HEK293 (cell line): ENCODE measurements at regions of chr9 and their contacts with region 1.

Region 1: GRCh38 chr9:70602321-70603019 is 188.0 kb upstream of the KLF9 start:
- H3K4me3 ChIP-seq: no peak overlapping the region
- H3K27ac ChIP-seq: peak overlapping the region; percentile 93; the same call in 1 of the 2 replicates
- H3K4me1 ChIP-seq: peaks cover 9% of the 10 kb centered on the region
- CTCF ChIP-seq: peak; percentile 42; the same call in 1 of the 2 replicates

Region 2: DNA sequence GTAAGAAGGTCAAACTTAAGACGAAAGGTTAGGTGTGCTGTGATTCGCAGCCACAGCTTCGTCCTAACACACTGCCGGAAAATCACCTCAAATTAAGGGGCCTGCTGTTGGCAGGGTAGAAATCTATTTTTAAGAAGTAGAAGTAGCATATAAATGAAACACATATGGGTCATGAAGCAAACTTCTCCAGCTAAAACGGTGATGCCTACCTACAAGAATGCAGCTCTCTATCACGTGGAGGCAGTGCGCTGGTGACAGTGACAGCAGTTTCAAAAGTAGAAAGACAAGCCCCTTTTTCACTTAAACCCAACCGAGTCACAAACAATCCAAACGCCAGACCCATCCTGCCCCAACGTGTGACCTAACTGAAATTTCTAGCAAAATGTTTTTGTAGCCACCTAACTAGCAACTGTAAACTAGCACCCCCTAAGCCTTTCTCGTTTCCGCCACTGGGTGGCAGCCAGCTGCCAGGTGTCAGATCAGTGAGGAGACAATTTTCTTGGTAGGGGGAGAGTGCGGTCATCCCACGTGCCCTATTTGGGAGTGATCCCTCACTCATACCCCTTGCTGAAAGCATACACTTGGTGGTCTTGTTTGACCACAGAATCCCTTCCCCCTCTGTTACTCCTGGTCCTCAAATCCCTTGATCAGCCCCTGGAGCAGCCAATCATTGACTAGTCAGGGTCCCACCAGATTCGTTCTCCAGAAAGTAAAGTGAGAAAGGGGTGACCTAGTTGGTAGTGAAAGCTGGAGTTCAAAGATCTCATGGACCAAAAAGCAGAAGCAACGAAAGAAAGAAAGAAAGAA is 630.6 kb before region 1 on chr9:
- CTCF ChIA-PET with region 1: interaction called, 16 read pairs
- POLR2A ChIA-PET with region 1: no interaction called
- H3K4me3 ChIP-seq: no peak overlapping the region
- H3K27ac ChIP-seq: no peak overlapping the region
- H3K4me1 ChIP-seq: no peaks in the 10 kb centered on the region
- CTCF ChIP-seq: peak; percentile 55; the same call in 1 of the 2 replicates

Region 3: DNA sequence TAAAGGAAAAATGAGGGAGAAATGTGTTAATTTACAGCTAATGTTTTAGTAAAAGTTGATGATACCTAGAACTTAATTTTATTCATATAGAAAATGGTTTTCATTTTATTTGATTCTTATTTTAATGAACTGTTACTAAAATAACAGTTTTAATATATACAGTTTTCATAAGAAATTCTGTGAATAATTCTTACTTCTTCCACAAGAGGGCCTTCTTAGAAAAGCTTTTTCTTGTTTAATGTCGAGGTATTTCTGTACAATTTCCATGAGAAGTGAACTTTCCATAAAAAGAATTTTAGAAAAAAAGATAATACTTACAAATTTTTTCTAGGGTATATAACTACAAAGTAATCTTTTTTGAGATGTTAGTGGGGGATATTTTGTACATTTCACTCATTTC is 261.9 kb before region 1 on chr9:
- CTCF ChIA-PET with region 1: interaction called, 56 read pairs
- POLR2A ChIA-PET with region 1: no interaction called
- H3K4me3 ChIP-seq: no peak overlapping the region
- H3K27ac ChIP-seq: no peak overlapping the region
- H3K4me1 ChIP-seq: no peaks in the 10 kb centered on the region
- CTCF ChIP-seq: no peak

Region 4: DNA sequence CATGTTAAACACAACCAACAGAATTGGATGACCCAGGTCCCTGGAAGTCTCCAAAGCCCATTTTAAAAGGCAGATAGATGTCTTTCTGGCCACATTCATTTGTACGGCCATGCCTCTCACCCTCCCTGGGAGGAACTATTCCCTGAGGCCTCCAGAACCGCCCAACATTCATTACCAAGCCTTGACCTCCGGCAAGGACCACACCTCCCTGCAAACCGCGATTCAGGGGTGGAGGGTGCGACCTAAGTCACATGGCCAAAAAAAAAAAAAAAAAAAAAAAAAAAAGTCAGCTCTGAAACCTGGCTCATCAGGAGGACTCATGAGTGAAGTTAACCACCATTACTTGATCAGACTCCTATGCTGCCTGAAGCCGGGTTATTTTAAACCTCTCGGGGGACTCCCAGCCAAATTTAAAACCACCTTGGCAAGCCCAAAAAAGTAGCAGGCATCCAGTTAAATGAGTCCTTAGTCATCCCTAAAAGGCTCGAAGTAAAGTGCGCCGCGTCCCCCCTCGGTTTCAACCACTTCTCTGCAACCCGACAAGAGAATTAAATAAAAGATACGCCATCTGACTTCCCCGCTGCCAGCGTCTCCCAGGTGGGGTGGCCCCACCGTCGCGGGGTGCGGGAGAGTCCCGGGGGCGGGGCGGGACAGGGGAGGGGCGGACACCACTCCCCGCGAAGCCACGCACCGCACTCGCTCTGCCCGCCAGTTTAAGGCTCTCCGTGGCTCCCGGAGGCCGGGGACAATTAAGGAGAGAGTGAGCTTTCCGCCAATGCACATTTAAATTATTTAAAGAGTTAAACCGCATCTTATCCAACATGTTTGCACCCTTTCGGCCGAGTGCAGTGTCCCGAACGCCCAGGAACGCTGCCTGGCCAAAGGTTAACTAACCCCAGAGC is 190.3 kb before region 1 on chr9:
- CTCF ChIA-PET with region 1: interaction called, 18 read pairs
- POLR2A ChIA-PET with region 1: interaction called, 13 read pairs
- H3K4me3 ChIP-seq: peak overlapping the region; percentile 94
- H3K27ac ChIP-seq: peak overlapping the region; percentile 79
- H3K4me1 ChIP-seq: peaks cover 9% of the 10 kb centered on the region
- CTCF ChIP-seq: no peak

Region 5: GRCh38 chr9:70484210-70485130 is 118.0 kb before region 1 on chr9:
- CTCF ChIA-PET with region 1: interaction called, 24 read pairs
- POLR2A ChIA-PET with region 1: interaction called, 3 read pairs
- H3K4me3 ChIP-seq: no peak overlapping the region
- H3K27ac ChIP-seq: no peak overlapping the region
- H3K4me1 ChIP-seq: no peaks in the 10 kb centered on the region
- CTCF ChIP-seq: no peak